K562 (cell line): ENCODE measurements at regions of chr5 and their contacts with region 1.

Region 1: DNA sequence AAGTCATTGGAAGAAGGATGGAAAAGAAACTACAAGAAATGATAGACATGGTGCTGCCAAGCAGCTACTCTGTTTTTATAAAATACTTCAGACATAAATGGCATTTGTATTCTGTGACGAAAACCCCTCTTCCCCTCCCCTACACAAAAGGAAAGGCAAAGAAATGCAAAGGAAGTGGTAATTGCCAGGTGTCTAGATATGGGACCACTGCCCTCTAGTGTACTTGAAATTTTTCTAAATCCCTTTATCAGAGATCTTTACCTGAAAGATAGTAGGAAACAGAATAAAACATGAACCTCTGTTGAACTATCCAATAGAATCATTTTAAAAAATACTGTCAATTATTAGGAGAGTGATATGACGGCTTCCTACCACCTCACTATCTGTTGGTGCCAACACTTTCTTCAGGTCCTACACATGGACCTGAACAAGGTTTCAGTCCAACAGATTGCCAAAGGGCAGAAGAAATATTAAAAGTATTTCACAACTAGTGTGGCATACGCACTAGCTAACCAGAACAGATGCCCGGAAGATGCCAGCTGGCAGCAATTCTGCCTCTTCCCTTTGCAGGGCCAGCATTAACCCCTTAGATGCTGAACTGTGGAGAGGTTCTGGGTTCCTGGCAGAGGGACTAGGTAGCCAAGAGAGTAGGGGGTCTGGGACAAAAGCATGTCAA is 104.1 kb downstream of the TSSK1B start:
- DNase-seq: peak in 3 of 4 experiments; percentile 15 to 19 (median 16)
- ATAC-seq: peak; percentile 71; the same call in 2 of the 3 replicates
- H3K4me3 ChIP-seq: no peak overlapping the region
- H3K27ac ChIP-seq: no peak overlapping the region
- H3K4me1 ChIP-seq: no peaks in the 10 kb centered on the region
- H3K27me3 ChIP-seq: no peaks in the 10 kb centered on the region; a peak in 2 of 5 replicates
- CTCF ChIP-seq: peak in 2 of 3 experiments; percentile 14 to 44; a peak in 3 of 6 replicates
- EP300 ChIP-seq: no peak
- POLR2A ChIP-seq: no peak
- RAD21 ChIP-seq: peak; percentile 27 to 67; a peak in 3 of 4 replicates

Region 2: DNA sequence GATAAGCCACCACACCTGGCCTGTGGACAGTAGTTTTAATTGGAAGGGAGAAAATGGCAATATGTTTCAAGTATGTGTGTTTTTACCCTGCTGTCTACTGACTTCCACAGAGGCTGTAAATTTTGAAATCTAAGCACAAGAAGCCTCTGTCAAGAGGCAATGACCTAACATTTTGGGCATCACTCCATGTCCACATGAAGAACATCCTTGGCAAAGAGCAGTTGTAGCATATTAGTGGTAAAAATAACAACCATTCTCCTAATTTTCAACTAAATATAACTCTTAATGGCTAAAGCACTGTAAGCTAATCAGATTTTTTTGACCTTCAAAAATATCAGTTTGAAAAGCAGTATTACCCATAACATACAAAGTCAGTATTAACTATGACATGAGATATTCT is 693.3 kb before region 1 on chr5:
- CTCF ChIA-PET with region 1: no interaction called
- POLR2A ChIA-PET with region 1: no interaction called
- in situ Hi-C with region 1: no loop called
- intact Hi-C with region 1: no loop called
- DNase-seq: no peak
- ATAC-seq: no peak
- H3K4me3 ChIP-seq: no peak overlapping the region
- H3K27ac ChIP-seq: no peak overlapping the region
- H3K4me1 ChIP-seq: no peaks in the 10 kb centered on the region
- H3K27me3 ChIP-seq: peaks cover 4 to 6% of the 10 kb centered on the region in 2 experiments; a peak in 1 of 5 replicates
- CTCF ChIP-seq: no peak
- EP300 ChIP-seq: no peak
- POLR2A ChIP-seq: no peak
- RAD21 ChIP-seq: no peak

Region 3: DNA sequence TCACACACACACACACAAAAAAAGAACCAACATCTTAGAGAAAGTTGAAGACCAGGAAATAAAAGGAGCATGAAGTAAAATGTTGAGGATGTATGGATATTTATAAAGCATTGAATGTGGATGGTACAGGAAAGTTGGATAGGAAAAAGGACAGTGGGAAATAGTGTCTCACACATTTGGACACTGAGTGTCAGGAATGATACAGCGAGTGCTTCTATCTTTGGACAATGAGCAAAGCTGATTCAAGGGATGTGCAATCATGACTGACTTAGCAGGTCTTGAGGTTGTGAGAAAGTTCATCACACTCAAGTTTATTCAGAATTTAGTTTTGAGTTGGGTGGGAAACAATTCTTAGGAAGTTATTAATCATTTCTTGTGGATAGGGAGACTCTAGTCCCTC is 519.6 kb before region 1 on chr5:
- CTCF ChIA-PET with region 1: no interaction called
- POLR2A ChIA-PET with region 1: no interaction called
- in situ Hi-C with region 1: no loop called
- intact Hi-C with region 1: no loop called
- DNase-seq: no peak
- ATAC-seq: no peak
- H3K4me3 ChIP-seq: no peak overlapping the region
- H3K27ac ChIP-seq: no peak overlapping the region
- H3K4me1 ChIP-seq: no peaks in the 10 kb centered on the region
- H3K27me3 ChIP-seq: no peaks in the 10 kb centered on the region
- CTCF ChIP-seq: no peak
- EP300 ChIP-seq: no peak
- POLR2A ChIP-seq: no peak
- RAD21 ChIP-seq: no peak

Region 4: GRCh38 chr5:112921833-112922817 is 408.5 kb before region 1 on chr5 and contains the start of gene REEP5:
- CTCF ChIA-PET with region 1: no interaction called
- POLR2A ChIA-PET with region 1: no interaction called
- in situ Hi-C with region 1: no loop called
- intact Hi-C with region 1: no loop called
- DNase-seq: peak; percentile 90 to 93 (median 92)
- ATAC-seq: peak; percentile 91
- H3K4me3 ChIP-seq: peak within 1 kb of the TSS; percentile 92
- H3K27ac ChIP-seq: peak within 1 kb of the TSS; percentile 89
- H3K4me1 ChIP-seq: peaks cover 18 to 20% of the 10 kb centered on the region in 2 experiments
- H3K27me3 ChIP-seq: no peaks in the 10 kb centered on the region
- CTCF ChIP-seq: peak; percentile 62 to 88 (median 79)
- EP300 ChIP-seq: no peak
- POLR2A ChIP-seq: peak; percentile 91
- RAD21 ChIP-seq: peak; percentile 72 to 86
- polyA plus RNA-seq, gene REEP5: 100 to 102 TPM

Region 5: GRCh38 chr5:112995764-112996618 is 334.7 kb before region 1 on chr5:
- CTCF ChIA-PET with region 1: no interaction called
- POLR2A ChIA-PET with region 1: no interaction called
- in situ Hi-C with region 1: no loop called
- intact Hi-C with region 1: loop called (anchors 1 kb)
- DNase-seq: peak; percentile 49 to 81 (median 56)
- ATAC-seq: peak; percentile 91
- H3K4me3 ChIP-seq: no peak overlapping the region
- H3K27ac ChIP-seq: no peak overlapping the region
- H3K4me1 ChIP-seq: no peaks in the 10 kb centered on the region
- H3K27me3 ChIP-seq: no peaks in the 10 kb centered on the region
- CTCF ChIP-seq: peak; percentile 74 to 92 (median 89)
- EP300 ChIP-seq: no peak
- POLR2A ChIP-seq: no peak
- RAD21 ChIP-seq: peak; percentile 85 to 88